A549 (cell line): ENCODE measurements at regions of chr3 and their contacts with region 1.

Region 1: DNA sequence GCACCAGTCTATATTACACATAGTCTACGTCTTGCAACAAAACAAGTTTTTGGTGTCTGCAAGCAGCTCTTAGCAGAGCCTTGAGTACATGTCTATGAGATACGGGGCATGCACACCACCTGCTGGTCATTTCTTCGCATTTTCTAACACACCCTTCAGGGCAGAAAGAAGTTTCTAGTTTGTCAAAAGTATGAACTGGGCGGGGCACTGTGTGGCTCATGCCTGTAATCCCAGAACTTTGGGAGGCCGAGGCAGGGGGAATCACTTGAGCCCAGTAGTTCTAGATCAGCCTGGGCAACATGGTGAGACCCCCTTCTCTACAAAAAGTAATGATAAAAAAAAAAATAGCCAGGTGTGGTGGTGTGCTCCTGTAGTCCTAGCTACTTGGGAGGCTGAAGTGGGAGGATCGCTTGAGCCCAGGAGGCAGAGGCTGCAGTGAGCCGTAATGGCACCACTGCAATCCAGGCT is 64.2 kb upstream of the ARL8B start:
- DNase-seq: peak; percentile 62 to 91
- ATAC-seq: peak; percentile 96
- H3K4me3 ChIP-seq: no peak overlapping the region
- H3K27ac ChIP-seq: peak overlapping the region; percentile 9 to 73; a peak in 4 of 6 replicates
- H3K4me1 ChIP-seq: peaks cover 16% of the 10 kb centered on the region; the same call in 2 of the 3 replicates
- CTCF ChIP-seq: peak; percentile 92
- EP300 ChIP-seq: no peak
- POLR2A ChIP-seq: no peak
- RAD21 ChIP-seq: peak; percentile 95 to 97

Region 2: DNA sequence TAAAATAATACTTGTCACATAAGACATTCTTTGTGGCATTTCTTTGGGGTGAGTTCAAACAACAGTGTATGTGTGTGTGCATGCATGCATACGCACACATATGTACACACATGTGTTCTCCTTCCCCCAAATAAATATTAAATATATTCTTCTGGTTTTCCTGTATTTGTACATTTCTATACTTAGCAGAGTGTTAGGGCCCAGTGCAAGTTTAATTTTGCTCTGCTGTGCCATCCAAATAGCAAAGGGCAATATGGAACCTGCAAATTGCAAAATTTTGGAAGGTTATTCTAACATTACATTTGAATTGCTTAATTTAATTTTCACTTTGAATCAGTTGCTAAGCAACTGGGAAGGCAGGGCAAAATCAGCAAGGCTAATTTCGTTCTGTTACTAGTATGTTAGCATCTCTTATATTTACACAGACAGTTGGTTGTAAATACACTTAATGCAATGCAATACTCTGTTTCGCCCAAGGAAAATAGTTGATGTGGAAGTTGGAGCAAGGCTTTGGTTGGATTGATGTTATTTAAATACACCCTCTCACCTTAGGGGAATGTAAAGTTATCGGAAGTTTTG is 434.4 kb before region 1 on chr3:
- CTCF ChIA-PET with region 1: no interaction called
- POLR2A ChIA-PET with region 1: no interaction called
- DNase-seq: no peak
- ATAC-seq: no peak
- H3K4me3 ChIP-seq: no peak overlapping the region
- H3K27ac ChIP-seq: no peak overlapping the region
- H3K4me1 ChIP-seq: no peaks in the 10 kb centered on the region
- CTCF ChIP-seq: no peak
- EP300 ChIP-seq: no peak
- POLR2A ChIP-seq: no peak
- RAD21 ChIP-seq: no peak

Region 3: DNA sequence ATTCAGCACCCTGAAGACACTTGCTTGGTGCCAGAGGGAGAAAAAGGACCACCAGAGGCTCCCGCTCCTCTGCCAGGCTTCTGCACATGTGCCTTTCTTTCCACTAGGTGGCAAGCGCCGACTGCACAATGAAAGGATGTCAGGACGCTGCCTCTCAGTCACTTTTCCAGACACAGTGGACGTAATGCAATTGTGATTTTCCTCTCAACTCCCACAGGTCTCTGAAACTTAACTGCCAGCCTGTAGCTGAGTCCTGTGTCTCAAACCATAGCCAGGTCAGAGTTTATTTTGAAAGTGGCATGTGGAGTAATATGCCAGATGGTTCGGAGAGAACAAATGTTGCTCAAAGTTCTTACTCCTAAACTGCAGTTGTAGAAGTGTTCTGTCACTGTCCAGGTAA is 401.8 kb before region 1 on chr3:
- CTCF ChIA-PET with region 1: interaction called, 38 read pairs
- POLR2A ChIA-PET with region 1: interaction called, 3 read pairs
- DNase-seq: peak; percentile 62 to 77
- ATAC-seq: peak; percentile 98 to 100
- H3K4me3 ChIP-seq: no peak overlapping the region
- H3K27ac ChIP-seq: no peak overlapping the region
- H3K4me1 ChIP-seq: no peaks in the 10 kb centered on the region
- CTCF ChIP-seq: peak; percentile 93
- EP300 ChIP-seq: no peak
- POLR2A ChIP-seq: no peak
- RAD21 ChIP-seq: peak; percentile 97 to 98

Region 4: DNA sequence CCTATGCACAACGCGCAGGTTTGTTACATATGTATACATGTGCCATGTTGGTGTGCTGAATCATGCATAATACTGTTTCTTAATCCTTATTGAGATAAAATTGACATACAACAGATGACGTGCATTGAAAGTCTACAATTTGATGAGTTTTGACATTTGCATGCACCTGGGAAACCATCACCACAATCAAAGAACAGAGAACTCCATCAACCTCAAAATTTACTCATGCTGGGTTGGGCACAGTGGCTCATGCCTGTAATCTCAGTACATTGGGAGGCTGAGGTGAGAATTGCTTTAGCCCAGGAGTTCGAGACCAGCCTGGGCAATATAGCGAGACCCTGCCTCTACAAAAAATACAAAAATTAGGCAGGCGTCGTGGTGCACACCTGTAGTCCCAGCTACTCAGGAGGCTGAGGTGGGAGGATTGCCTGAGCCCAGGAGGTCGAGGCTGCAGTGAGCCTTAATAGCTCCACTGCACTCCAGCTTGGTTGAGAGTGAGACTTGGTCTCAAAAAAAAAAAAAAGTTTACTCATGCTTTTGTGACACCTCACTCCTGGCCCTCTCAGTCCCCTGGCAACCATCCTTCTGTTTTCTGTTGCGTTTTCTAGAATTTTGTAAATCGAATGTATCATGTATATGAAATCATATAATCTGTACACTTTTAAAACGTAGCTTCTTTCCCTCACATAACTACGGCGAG is 22.0 kb before region 1 on chr3:
- CTCF ChIA-PET with region 1: interaction called, 31 read pairs
- POLR2A ChIA-PET with region 1: no interaction called
- DNase-seq: no peak
- ATAC-seq: no peak; a peak in 1 of 6 replicates
- H3K4me3 ChIP-seq: no peak overlapping the region
- H3K27ac ChIP-seq: no peak overlapping the region
- H3K4me1 ChIP-seq: no peaks in the 10 kb centered on the region
- CTCF ChIP-seq: no peak
- EP300 ChIP-seq: no peak
- POLR2A ChIP-seq: no peak
- RAD21 ChIP-seq: no peak

Region 5: DNA sequence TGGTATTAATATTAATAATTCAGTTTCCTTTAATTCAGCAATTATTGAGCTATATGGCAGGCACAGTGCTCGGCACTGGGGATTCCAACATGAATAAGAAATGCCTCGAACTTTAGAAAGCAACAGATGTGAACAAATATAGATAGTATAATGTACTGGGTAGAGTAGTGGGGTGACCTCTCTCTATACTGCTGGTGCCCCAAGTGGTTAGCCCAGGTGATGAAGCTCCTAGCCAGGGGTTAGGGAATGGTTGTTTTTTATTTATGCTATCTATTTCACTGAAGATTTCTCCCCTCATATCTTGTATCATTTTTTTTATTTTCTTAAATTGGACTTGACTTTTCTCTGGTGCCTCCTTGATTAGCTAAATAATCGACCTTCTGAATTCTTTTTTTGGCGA is 16.6 kb before region 1 on chr3:
- CTCF ChIA-PET with region 1: interaction called, 18 read pairs
- POLR2A ChIA-PET with region 1: no interaction called
- DNase-seq: no peak
- ATAC-seq: no peak; a peak in 1 of 6 replicates
- H3K4me3 ChIP-seq: no peak overlapping the region
- H3K27ac ChIP-seq: no peak overlapping the region
- H3K4me1 ChIP-seq: no peaks in the 10 kb centered on the region
- CTCF ChIP-seq: no peak
- EP300 ChIP-seq: no peak
- POLR2A ChIP-seq: no peak
- RAD21 ChIP-seq: no peak

Region 6: GRCh38 chr3:5071061-5071460 is 13.2 kb after region 1 on chr3:
- CTCF ChIA-PET with region 1: interaction called, 15 read pairs
- POLR2A ChIA-PET with region 1: no interaction called
- DNase-seq: peak in 1 of 2 experiments; percentile 33
- ATAC-seq: peak in 1 of 2 experiments; percentile 55; a peak in 3 of 6 replicates
- H3K4me3 ChIP-seq: no peak overlapping the region
- H3K27ac ChIP-seq: no peak overlapping the region
- H3K4me1 ChIP-seq: peaks cover 6% of the 10 kb centered on the region; the same call in 2 of the 3 replicates
- CTCF ChIP-seq: no peak
- EP300 ChIP-seq: no peak
- POLR2A ChIP-seq: no peak
- RAD21 ChIP-seq: peak in 1 of 2 experiments; percentile 14; a peak in 1 of 5 replicates

Region 7: DNA sequence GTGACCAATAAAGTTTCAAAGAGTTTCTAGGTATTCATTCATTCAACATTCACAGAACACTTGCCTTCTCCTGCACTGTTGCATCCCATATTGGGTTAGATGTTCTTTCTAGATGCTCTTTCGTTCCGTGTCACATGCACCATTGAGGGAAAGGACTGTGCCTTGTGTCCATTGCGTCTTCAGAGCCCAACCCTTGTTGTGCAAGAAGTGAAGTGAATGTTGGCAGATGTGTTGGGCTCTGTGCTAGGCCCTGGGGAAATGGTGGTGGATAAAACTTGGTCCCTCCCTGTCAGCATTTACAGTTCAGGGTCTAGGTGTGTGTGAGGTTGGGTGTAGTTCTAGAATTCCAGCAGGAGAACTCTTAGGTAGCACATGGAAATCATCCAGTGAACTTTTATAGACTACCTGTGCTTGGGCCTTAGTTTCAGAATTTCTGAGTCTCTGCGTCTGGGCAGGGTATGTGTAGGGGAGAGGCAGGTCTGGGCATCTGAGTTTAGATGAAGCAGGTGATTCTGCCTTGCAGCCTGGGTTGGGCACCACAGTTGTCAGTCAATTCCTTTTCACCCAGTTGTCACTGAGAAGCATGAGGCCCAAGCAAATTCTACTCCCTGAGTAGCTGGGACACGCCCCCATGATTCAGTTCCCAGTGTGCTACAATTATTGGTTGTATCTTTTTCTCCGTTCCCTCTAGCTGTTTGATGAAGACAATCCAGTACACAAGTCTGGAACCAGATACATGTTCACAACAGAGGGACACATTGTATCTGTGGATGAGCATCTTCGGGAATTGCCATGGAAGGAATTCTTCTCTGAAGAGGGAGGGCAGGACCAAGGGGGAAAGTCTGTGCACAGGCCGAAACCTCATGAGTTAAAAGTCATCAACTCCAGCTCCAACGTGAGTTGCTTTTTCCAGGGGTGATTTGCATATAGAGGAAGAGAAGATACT is 155.0 kb after region 1 on chr3:
- CTCF ChIA-PET with region 1: no interaction called
- POLR2A ChIA-PET with region 1: no interaction called
- DNase-seq: no peak
- ATAC-seq: no peak; a peak in 1 of 6 replicates
- H3K4me3 ChIP-seq: no peak overlapping the region
- H3K27ac ChIP-seq: no peak overlapping the region
- H3K4me1 ChIP-seq: no peaks in the 10 kb centered on the region
- CTCF ChIP-seq: no peak
- EP300 ChIP-seq: no peak
- POLR2A ChIP-seq: no peak
- RAD21 ChIP-seq: no peak

Region 8: DNA sequence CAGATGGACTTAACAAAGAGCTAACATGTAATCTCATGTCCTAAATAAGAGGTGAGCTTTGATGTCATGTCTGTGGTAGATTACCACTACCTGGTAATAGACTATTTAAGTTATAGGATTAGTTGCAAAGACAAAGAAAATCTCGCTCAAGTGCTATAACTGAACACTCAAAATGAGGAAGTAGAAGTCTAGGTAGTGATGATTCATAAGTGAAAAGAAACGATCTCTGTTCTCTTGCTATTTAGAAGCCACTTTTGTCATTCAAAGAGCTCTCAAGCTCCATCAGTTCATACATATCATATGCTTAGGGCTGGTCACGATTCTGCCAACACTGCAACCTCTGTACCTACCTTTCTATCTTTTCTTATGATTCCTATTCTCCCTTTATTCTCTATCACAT is 240.6 kb after region 1 on chr3:
- CTCF ChIA-PET with region 1: no interaction called
- POLR2A ChIA-PET with region 1: no interaction called
- DNase-seq: no peak
- ATAC-seq: no peak
- H3K4me3 ChIP-seq: no peak overlapping the region
- H3K27ac ChIP-seq: no peak overlapping the region
- H3K4me1 ChIP-seq: no peaks in the 10 kb centered on the region
- CTCF ChIP-seq: no peak
- EP300 ChIP-seq: no peak
- POLR2A ChIP-seq: no peak
- RAD21 ChIP-seq: no peak